Sigmoid colon (tissue), 7 donors: ENCODE measurements at regions of chr1 and their contacts with region 1.

Region 1: DNA sequence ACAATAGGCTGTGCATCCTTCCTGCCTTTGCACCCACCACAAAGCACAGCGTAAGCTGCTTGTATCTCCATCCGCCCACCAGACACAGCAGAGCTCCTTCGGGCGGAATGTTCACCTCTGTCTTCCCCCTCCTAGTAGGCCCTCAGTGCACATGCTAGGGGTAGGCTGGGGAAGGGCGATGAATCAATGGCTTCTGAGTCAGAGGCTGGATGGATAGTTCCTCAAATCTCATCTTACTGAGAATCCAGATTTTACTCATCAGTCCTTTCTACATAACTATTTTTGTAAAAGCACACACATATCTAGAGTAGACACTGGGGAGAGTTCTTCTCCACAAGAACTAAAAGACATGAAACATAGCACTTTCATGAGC is 73.8 kb downstream of the BCAR3 start:
- DNase-seq: no peak
- H3K4me3 ChIP-seq: no peak overlapping the region
- H3K27ac ChIP-seq: peak overlapping the region in 2 of 4 donors; percentile 12 to 30
- H3K4me1 ChIP-seq: peaks cover 0 to 32% (median 29%) of the 10 kb centered on the region in 4 donors
- H3K27me3 ChIP-seq: no peaks in the 10 kb centered on the region
- CTCF ChIP-seq: no peak
- EP300 ChIP-seq: no peak
- POLR2A ChIP-seq: no peak

Region 2: GRCh38 chr1:93552741-93553455 is 54.9 kb before region 1 on chr1:
- intact Hi-C with region 1: loop called (anchors 5 kb)
- DNase-seq: no peak
- H3K4me3 ChIP-seq: no peak overlapping the region
- H3K27ac ChIP-seq: peak overlapping the region; percentile 17 to 56 (median 48)
- H3K4me1 ChIP-seq: peaks cover 0 to 24% (median 20%) of the 10 kb centered on the region in 4 donors
- H3K27me3 ChIP-seq: no peaks in the 10 kb centered on the region
- CTCF ChIP-seq: no peak
- EP300 ChIP-seq: no peak
- POLR2A ChIP-seq: no peak